PC-3 (cell line): ENCODE measurements at regions of chr12 and their contacts with region 1.

Region 1: DNA sequence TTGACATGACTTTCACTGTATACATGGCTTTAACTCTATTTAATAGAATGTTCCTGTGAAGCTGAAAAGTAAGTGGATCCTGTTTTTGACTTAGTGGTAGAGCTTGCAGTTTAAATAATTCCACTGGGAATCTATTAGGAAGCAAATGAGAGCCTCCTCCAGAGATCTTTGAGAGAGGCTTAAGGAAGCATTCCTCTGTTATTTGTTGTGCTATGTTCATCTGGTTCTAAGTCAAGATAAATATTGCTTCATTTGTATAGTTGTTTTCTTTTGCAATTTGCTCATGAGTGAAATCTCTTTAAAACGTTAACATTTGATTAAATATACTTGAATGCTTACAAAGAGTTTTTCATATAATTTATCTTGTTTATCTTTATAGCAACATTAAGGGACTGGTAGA is 70.4 kb downstream of the TMTC2 start:
- DNase-seq: no peak
- ATAC-seq: no peak
- H3K4me3 ChIP-seq: no peak overlapping the region
- H3K27ac ChIP-seq: no peak overlapping the region
- H3K4me1 ChIP-seq: no peaks in the 10 kb centered on the region
- H3K27me3 ChIP-seq: no peaks in the 10 kb centered on the region
- CTCF ChIP-seq: no peak

Region 2: GRCh38 chr12:84463741-84464495 is 1706.9 kb after region 1 on chr12:
- CTCF ChIA-PET with region 1: no interaction called
- POLR2A ChIA-PET with region 1: interaction called, 11 read pairs
- intact Hi-C with region 1: no loop called
- DNase-seq: no peak
- ATAC-seq: no peak
- H3K4me3 ChIP-seq: no peak overlapping the region
- H3K27ac ChIP-seq: no peak overlapping the region
- H3K4me1 ChIP-seq: no peaks in the 10 kb centered on the region
- H3K27me3 ChIP-seq: peaks cover 3% of the 10 kb centered on the region; the same call in 1 of the 2 replicates
- CTCF ChIP-seq: no peak